Activated T-helper 1 cell treated with anti-CD3 and anti-CD28 coated beads, Interleukin-12 subunit alpha, Interleukin-12 subunit beta, Interleukin-2, Interleukin-4 antibody, amounts not matched to agents 30 ng/mL and 10 ng/mL and 1 ng/mL, durations not matched to agents 14 hours and 24 hours and 36 hours (primary cell): ENCODE measurements at regions of chr1 and their contacts with region 1.

Region 1: GRCh38 chr1:235971571-235972310 is 93.1 kb downstream of the NID1 start:
- DNase-seq: peak; percentile 80
- H3K4me3 Mint-ChIP-seq: peak overlapping the region; percentile 79
- H3K27ac Mint-ChIP-seq: peak overlapping the region; percentile 84
- H3K4me1 Mint-ChIP-seq: peaks cover 17% of the 10 kb centered on the region
- H3K27me3 Mint-ChIP-seq: peaks cover 11% of the 10 kb centered on the region

Region 2: GRCh38 chr1:235783148-235783776 is 188.5 kb before region 1 on chr1:
- intact Hi-C with region 1: loop called (anchors 5 kb)
- DNase-seq: no peak
- H3K4me3 Mint-ChIP-seq: no peak overlapping the region
- H3K27ac Mint-ChIP-seq: no peak overlapping the region
- H3K4me1 Mint-ChIP-seq: no peaks in the 10 kb centered on the region
- H3K27me3 Mint-ChIP-seq: no peaks in the 10 kb centered on the region

Region 3: GRCh38 chr1:235855811-235856429 is 115.8 kb before region 1 on chr1:
- intact Hi-C with region 1: loop called (anchors 2 kb)
- DNase-seq: no peak
- H3K4me3 Mint-ChIP-seq: no peak overlapping the region
- H3K27ac Mint-ChIP-seq: peak overlapping the region; percentile 37
- H3K4me1 Mint-ChIP-seq: peaks cover 41% of the 10 kb centered on the region
- H3K27me3 Mint-ChIP-seq: no peaks in the 10 kb centered on the region

Region 4: GRCh38 chr1:235910357-235911299 is 61.1 kb before region 1 on chr1:
- intact Hi-C with region 1: loop called (anchors 2 kb)
- DNase-seq: no peak
- H3K4me3 Mint-ChIP-seq: peak overlapping the region; percentile 41
- H3K27ac Mint-ChIP-seq: peak overlapping the region; percentile 60
- H3K4me1 Mint-ChIP-seq: peaks cover 37% of the 10 kb centered on the region
- H3K27me3 Mint-ChIP-seq: no peaks in the 10 kb centered on the region

Region 5: GRCh38 chr1:236440373-236440772 is 468.6 kb after region 1 on chr1:
- intact Hi-C with region 1: no loop called
- DNase-seq: no peak
- H3K4me3 Mint-ChIP-seq: no peak overlapping the region
- H3K27ac Mint-ChIP-seq: no peak overlapping the region
- H3K4me1 Mint-ChIP-seq: no peaks in the 10 kb centered on the region
- H3K27me3 Mint-ChIP-seq: peaks cover 2% of the 10 kb centered on the region